ENCODE measurements at regions of chr15 and their contacts with region 1.

Region 1: GRCh38 chr15:63986751-63987341 is 59.4 kb downstream of the DAPK2 start:
- DNase-seq: peak; percentile 96
- ATAC-seq: peak; percentile 83
- H3K4me3 ChIP-seq: peak overlapping the region; percentile 1; the same call in 1 of the 2 replicates
- H3K27ac ChIP-seq: peak overlapping the region; percentile 92
- H3K4me1 ChIP-seq: peaks cover 77% of the 10 kb centered on the region
- H3K27me3 ChIP-seq: no peaks in the 10 kb centered on the region
- CTCF ChIP-seq: peak in 1 of 3 experiments; percentile 36; a peak in 2 of 6 replicates
- EP300 ChIP-seq: peak in 1 of 2 experiments; percentile 61; a peak in 2 of 4 replicates
- POLR2A ChIP-seq: no peak
- RAD21 ChIP-seq: peak; percentile 52

Region 2: GRCh38 chr15:63833021-63833696 is 153.7 kb before region 1 on chr15:
- CTCF ChIA-PET with region 1: interaction called, 4 read pairs
- POLR2A ChIA-PET with region 1: interaction called, 6 read pairs
- RAD21 ChIA-PET with region 1: interaction called, 6 read pairs
- SMC1A ChIA-PET with region 1: interaction called, 6 read pairs
- in situ Hi-C with region 1: no loop called
- intact Hi-C with region 1: loop called (anchors 5 kb)
- DNase-seq: no peak
- ATAC-seq: peak; percentile 68
- H3K4me3 ChIP-seq: peak overlapping the region; percentile 99
- H3K27ac ChIP-seq: peak overlapping the region; percentile 99
- H3K4me1 ChIP-seq: peaks cover 10% of the 10 kb centered on the region
- H3K27me3 ChIP-seq: no peaks in the 10 kb centered on the region
- CTCF ChIP-seq: no peak
- EP300 ChIP-seq: no peak
- POLR2A ChIP-seq: no peak
- RAD21 ChIP-seq: no peak

Region 3: GRCh38 chr15:63896336-63897115 is 90.3 kb before region 1 on chr15:
- CTCF ChIA-PET with region 1: interaction called, 81 read pairs
- POLR2A ChIA-PET with region 1: interaction called, 5 read pairs
- RAD21 ChIA-PET with region 1: interaction called, 17 read pairs
- SMC1A ChIA-PET with region 1: interaction called, 36 read pairs
- in situ Hi-C with region 1: no loop called
- intact Hi-C with region 1: loop called (anchors 2 kb)
- DNase-seq: peak; percentile 90
- ATAC-seq: peak; percentile 84
- H3K4me3 ChIP-seq: no peak overlapping the region
- H3K27ac ChIP-seq: peak overlapping the region; percentile 84
- H3K4me1 ChIP-seq: peaks cover 59% of the 10 kb centered on the region
- H3K27me3 ChIP-seq: no peaks in the 10 kb centered on the region
- CTCF ChIP-seq: no peak
- EP300 ChIP-seq: peak; percentile 93 to 95
- POLR2A ChIP-seq: no peak
- RAD21 ChIP-seq: no peak

Region 4: DNA sequence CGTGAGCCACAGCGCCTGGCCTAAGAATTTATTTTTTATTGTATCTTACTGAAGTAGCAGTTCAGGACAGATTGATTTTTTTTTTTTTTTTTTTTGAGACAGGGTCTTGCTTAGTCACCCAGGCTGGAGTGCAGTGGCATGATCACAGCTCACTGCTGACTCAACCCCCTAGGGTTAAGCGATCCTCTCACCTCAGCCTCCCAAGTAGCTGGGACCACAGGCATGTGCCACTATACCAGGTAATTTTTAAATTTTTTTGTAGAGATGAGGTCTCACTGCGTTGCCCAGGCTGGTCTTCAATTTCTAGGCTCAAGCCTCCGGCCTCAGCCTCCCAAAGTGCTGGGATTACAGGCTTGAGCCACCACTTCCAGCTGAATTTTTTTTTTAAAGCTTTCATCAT is 53.3 kb before region 1 on chr15:
- CTCF ChIA-PET with region 1: no interaction called
- POLR2A ChIA-PET with region 1: no interaction called
- RAD21 ChIA-PET with region 1: no interaction called
- SMC1A ChIA-PET with region 1: no interaction called
- in situ Hi-C with region 1: no loop called
- intact Hi-C with region 1: no loop called
- DNase-seq: no peak
- ATAC-seq: no peak
- H3K4me3 ChIP-seq: no peak overlapping the region
- H3K27ac ChIP-seq: no peak overlapping the region
- H3K4me1 ChIP-seq: no peaks in the 10 kb centered on the region
- H3K27me3 ChIP-seq: no peaks in the 10 kb centered on the region
- CTCF ChIP-seq: no peak
- EP300 ChIP-seq: no peak
- POLR2A ChIP-seq: no peak
- RAD21 ChIP-seq: no peak

Region 5: DNA sequence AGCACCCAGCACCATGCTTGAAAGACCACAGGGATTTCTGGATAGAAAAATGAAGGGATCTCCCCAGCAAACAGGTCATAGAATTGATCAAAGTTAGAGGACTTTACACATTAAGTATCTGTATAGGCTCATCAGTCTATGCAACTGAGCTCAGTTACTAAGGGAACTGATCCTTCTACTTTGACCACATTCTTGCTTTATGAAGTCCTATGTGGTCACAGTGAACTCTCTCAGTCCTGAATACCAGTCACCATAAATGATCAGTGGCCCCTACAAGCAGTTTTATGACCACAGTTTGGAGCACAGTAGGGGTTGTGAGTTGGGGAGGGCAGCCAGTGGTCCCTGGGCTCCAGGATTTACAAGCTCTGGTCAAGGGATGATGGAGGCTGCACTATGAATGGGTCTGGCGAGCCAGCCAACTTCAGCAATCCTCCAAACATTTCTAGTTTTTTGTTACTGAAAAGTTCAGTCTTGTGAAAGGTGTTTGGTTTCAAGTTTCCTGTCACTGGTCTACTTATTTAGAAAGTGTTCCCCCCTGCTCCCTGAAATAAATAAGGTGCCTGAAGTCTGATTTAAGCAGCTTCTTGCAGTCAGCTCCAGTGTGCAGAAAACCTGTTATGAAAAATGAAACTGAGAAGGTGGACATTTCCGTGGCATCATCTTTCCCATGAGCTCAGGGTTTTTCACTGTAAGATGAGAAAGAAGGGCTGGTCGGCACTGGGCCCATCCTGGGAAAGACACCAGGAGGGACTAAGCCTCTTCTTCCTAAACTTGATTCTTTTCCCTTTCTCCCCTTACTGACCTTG is 16.0 kb before region 1 on chr15:
- CTCF ChIA-PET with region 1: interaction called, 29 read pairs
- POLR2A ChIA-PET with region 1: interaction called, 22 read pairs
- RAD21 ChIA-PET with region 1: interaction called, 102 read pairs
- SMC1A ChIA-PET with region 1: interaction called, 40 read pairs
- in situ Hi-C with region 1: no loop called
- intact Hi-C with region 1: loop called (anchors 1 kb)
- DNase-seq: peak; percentile 85
- ATAC-seq: peak; percentile 96
- H3K4me3 ChIP-seq: peak overlapping the region; percentile 24
- H3K27ac ChIP-seq: peak overlapping the region; percentile 95
- H3K4me1 ChIP-seq: peaks cover 48% of the 10 kb centered on the region
- H3K27me3 ChIP-seq: no peaks in the 10 kb centered on the region
- CTCF ChIP-seq: no peak
- EP300 ChIP-seq: peak; percentile 46 to 90; a peak in 3 of 4 replicates
- POLR2A ChIP-seq: no peak
- RAD21 ChIP-seq: no peak

Region 6: DNA sequence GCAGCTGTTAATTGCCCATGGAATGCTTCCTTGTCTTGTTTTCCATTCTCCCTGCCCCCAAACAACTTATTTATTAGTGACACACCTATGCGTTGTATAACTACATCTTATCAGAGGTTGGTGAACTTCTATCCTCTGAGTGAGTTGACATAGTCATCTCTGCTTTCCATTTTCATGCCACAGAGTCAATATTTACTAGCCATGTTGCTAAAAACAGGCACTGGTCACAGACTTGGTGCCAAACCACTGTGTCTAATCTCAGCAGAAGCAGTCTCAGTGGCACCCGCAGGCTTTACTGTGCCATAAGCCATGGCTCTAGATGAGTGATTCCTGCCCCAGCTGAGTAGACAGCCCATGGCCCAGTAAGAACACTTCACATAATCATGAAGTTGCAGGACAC is 32.9 kb after region 1 on chr15:
- CTCF ChIA-PET with region 1: no interaction called
- POLR2A ChIA-PET with region 1: no interaction called
- RAD21 ChIA-PET with region 1: no interaction called
- SMC1A ChIA-PET with region 1: no interaction called
- in situ Hi-C with region 1: no loop called
- intact Hi-C with region 1: no loop called
- DNase-seq: peak; percentile 45
- ATAC-seq: peak; percentile 86
- H3K4me3 ChIP-seq: no peak overlapping the region
- H3K27ac ChIP-seq: no peak overlapping the region
- H3K4me1 ChIP-seq: 0 out of 2 replicates have a peak, but pooled peaks cover 4% of the 10 kb centered on the region
- H3K27me3 ChIP-seq: no peaks in the 10 kb centered on the region
- CTCF ChIP-seq: no peak
- EP300 ChIP-seq: no peak
- POLR2A ChIP-seq: no peak
- RAD21 ChIP-seq: no peak

Region 7: GRCh38 chr15:64067564-64068030 is 80.8 kb after region 1 on chr15:
- CTCF ChIA-PET with region 1: interaction called, 55 read pairs
- POLR2A ChIA-PET with region 1: no interaction called
- RAD21 ChIA-PET with region 1: interaction called, 15 read pairs
- SMC1A ChIA-PET with region 1: interaction called, 20 read pairs
- in situ Hi-C with region 1: no loop called
- intact Hi-C with region 1: loop called (anchors 5 kb)
- DNase-seq: peak; percentile 40
- ATAC-seq: peak; percentile 94
- H3K4me3 ChIP-seq: no peak overlapping the region
- H3K27ac ChIP-seq: no peak overlapping the region
- H3K4me1 ChIP-seq: peaks cover 13% of the 10 kb centered on the region
- H3K27me3 ChIP-seq: no peaks in the 10 kb centered on the region
- CTCF ChIP-seq: peak; percentile 72 to 83 (median 77)
- EP300 ChIP-seq: no peak
- POLR2A ChIP-seq: no peak
- RAD21 ChIP-seq: peak; percentile 89

Region 8: GRCh38 chr15:64144565-64145281 is 157.9 kb after region 1 on chr15:
- CTCF ChIA-PET with region 1: no interaction called
- POLR2A ChIA-PET with region 1: no interaction called
- RAD21 ChIA-PET with region 1: no interaction called
- SMC1A ChIA-PET with region 1: no interaction called
- in situ Hi-C with region 1: no loop called
- intact Hi-C with region 1: no loop called
- DNase-seq: peak; percentile 79
- ATAC-seq: peak; percentile 91
- H3K4me3 ChIP-seq: peak overlapping the region; percentile 21; the same call in 1 of the 2 replicates
- H3K27ac ChIP-seq: peak overlapping the region; percentile 92
- H3K4me1 ChIP-seq: peaks cover 42% of the 10 kb centered on the region
- H3K27me3 ChIP-seq: no peaks in the 10 kb centered on the region
- CTCF ChIP-seq: no peak
- EP300 ChIP-seq: peak in 1 of 2 experiments; percentile 49; a peak in 2 of 4 replicates
- POLR2A ChIP-seq: peak; percentile 72
- RAD21 ChIP-seq: no peak

Region 9: GRCh38 chr15:64289550-64289949 is 302.7 kb after region 1 on chr15:
- CTCF ChIA-PET with region 1: no interaction called
- POLR2A ChIA-PET with region 1: no interaction called
- RAD21 ChIA-PET with region 1: no interaction called
- SMC1A ChIA-PET with region 1: no interaction called
- in situ Hi-C with region 1: no loop called
- intact Hi-C with region 1: no loop called
- DNase-seq: no peak
- ATAC-seq: no peak
- H3K4me3 ChIP-seq: no peak overlapping the region
- H3K27ac ChIP-seq: no peak overlapping the region
- H3K4me1 ChIP-seq: no peaks in the 10 kb centered on the region
- H3K27me3 ChIP-seq: no peaks in the 10 kb centered on the region
- CTCF ChIP-seq: no peak
- EP300 ChIP-seq: no peak
- POLR2A ChIP-seq: no peak
- RAD21 ChIP-seq: no peak